ENCODE measurements at regions of chr2 and their contacts with region 1.

Region 1: DNA sequence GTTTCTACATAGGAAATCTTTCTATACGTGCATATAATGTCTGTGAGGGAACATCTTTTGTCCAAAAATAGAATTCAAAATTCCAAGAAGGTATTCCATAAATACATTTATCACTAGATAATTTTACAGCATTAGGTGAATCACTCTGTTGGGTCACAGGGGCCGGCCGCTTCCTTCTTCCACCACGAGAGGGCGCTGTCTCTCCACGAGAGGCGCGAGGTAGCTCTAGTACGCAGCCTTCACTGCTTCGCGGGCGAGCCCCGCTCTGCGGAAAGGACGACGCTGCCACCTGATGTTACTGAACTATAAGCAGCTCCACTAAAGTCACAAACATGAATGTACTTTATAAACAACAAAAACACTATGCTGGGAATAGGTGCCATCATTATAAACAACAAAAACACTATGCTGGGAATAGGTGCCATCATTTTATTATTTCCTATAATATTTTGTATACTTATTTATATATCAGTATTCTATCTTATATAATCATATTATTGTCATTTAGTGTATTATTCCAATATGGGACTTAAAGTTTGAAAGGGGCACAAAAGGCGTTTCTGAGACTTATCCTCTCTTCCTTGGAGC is 69.4 kb upstream of the REV1 start:
- DNase-seq: peak; percentile 75 to 97 (median 94)

Region 2: DNA sequence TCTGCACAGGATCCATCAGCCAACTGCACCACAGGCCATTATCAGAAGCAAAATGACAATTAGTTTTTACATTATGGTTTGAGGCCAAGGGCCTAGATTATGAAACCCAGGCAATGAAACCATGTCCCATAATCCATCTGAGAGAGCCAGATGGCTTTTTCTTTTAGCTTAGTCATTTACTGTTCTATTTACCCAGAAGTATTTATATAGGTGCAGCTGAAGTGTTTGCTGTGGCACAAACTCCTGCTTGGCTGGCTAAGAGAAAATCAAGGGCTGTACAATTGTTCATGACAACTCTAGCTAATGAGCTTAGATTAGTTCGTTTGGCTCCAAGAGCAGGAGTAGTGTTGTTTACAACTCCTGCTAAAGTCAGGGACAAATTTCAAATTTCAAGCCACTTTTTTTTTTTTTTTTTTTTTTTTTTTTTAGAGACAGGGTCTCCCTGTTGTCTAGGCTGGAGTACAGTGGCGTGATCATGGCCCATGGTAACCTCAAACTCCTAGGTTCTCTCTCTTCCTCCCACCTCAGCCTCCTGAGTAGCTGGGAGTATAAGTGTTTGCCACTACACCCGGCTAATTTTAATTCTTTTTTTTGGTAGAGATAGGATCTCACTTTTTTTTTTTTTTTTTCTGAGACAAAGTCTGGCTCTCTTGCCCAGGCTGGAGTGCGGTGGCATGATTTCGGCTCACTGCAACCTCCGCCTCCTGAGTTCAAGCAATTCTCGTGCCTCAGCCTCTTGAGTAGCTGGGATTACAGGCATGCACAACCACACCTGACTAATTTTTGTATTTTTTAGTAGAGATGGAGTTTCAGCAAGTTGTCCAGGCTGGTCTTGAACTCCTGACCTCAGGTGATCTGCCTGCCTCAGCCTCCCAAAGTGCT is 51.0 kb before region 1 on chr2:
- intact Hi-C with region 1: no loop called
- DNase-seq: no peak

Region 3: DNA sequence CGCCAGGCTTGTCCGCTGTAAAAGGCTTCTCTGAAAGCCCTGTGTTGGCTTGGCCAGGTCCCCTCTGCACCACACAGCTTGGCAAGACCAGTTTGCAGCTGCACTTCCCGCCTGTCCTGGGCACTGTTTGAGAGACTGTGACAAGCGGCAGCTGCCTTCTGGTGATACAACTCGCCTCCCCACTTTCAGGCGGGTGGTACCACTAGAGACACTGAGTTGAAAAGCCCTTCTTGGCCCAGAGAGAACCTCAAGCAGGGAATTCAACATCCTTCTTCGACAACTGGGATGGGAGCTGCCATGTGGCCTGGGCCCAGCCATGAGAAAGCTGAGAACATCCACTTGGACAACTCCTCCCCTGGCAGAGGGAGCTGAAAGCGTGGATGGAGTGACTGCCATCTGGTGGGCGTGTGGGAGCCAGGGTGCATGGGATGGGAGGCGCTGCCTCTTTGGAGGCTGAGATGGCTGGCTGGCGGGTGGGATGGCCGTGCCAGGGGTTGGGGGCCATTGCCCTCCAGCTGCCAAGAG is 56.1 kb after region 1 on chr2:
- intact Hi-C with region 1: loop called (anchors 2 kb)
- DNase-seq: peak; percentile 24 to 93 (median 50)

Region 4: GRCh38 chr2:99819766-99820165 is 260.6 kb after region 1 on chr2:
- intact Hi-C with region 1: loop called (anchors 2 kb)
- DNase-seq: no peak

Region 5: DNA sequence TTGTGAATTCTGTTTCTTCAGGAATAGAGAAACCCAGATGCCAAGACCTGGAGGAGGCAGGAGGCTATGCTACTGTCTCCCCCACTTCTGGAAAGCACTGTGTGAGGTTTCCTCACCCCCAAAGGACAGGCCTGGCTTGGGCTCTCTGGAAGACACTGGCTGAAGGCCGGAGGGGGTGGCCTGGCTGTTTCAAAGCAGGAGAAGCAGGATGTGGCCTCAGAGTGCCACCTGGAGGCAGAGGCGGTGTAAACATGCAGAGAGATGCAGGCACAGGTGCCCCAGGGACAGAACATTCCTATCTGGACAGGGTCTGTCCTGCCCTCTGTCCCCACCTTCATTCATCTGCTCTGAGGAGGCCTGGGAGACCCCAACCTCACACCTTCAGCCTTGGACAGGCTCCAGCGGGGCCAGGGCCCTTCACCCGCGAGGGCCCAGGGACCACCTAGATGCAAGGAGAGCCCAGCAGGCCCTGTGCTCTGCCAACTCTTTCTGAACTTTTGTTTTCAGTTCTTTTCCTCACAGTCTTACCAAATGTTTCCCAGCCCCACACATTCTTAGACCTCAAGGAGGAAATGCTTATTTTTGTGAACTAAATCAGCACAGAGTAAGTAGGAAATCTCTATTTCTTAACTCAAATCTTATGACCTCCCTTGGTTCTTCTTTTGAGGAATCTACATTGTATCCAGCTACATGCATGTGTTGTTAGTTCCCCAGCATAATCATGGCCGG is 683.9 kb after region 1 on chr2:
- intact Hi-C with region 1: loop called (anchors 5 kb)
- DNase-seq: peak; percentile 29 to 94 (median 61)

Region 6: DNA sequence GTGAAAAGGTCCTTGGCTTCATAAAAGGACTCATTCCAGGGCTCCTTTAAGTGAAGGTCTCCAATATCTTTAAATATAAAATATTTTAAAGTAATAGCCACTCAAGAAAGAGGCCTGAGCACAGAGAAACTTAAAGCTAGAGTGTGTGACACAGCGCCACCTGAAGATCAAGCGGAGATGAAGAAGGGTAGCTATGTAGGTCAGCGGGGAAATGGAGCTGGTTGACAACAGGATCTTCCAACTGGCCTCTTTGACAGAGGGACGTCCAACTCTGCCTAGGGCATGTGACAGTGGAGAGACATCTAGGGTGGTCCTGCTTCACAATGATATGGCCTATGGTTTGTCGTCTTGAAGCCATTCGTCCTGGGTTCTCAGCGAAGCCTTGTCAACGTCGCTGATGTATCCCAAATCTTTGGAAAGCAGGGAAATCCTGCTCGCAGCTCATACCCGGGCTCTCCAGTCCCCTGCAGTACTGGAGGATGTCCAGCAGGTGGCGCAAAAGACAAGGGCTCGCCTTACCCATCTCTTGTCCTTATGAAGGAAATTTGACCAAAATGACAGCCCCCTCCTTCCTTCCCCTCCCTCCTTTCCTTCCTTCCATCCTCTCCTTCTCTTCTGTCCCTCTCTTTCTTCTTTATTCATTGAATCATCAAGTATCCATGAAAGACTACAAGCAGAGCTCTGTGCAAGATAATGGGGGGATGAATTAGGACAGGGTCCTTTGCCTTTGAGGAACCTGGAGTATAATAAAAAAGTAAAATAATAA is 703.6 kb after region 1 on chr2:
- intact Hi-C with region 1: loop called (anchors 1 kb)
- DNase-seq: peak; percentile 66 to 97 (median 84)

Region 7: DNA sequence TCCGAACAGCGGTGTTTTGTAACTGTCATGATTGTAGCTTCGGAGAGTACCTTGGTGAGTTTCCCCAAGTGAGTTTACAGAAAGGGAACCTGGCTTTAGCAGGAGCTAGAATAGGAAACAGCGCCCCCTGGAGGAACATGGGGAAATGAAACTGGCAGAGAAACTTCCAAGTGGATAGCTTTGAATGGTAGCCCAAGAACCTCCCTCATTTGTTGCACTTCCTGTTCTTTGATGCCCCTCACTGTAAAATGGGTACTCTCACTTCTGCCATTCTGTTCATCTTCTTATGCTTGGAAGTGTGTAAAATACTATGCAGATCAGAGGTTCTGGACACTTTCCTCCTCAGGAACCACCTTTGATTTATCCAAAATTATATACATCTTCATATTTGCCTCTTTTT is 822.1 kb after region 1 on chr2:
- intact Hi-C with region 1: loop called (anchors 5 kb)
- DNase-seq: peak in 8 of 10 donors; percentile 64 to 93 (median 80)

Measured in posterior cingulate gyrus (tissue), 11 donors.